Panc1 (cell line): ENCODE measurements at regions of chr4 and their contacts with region 1.

Region 1: GRCh38 chr4:73662709-73663546 is 42.7 kb upstream of the RASSF6 start:
- DNase-seq: no peak
- ATAC-seq: peak; percentile 79
- H3K4me3 ChIP-seq: no peak overlapping the region
- H3K27ac ChIP-seq: peak overlapping the region; percentile 63; the same call in 1 of the 2 replicates
- H3K4me1 ChIP-seq: no peaks in the 10 kb centered on the region
- H3K27me3 ChIP-seq: no peaks in the 10 kb centered on the region
- CTCF ChIP-seq: peak; percentile 55

Region 2: DNA sequence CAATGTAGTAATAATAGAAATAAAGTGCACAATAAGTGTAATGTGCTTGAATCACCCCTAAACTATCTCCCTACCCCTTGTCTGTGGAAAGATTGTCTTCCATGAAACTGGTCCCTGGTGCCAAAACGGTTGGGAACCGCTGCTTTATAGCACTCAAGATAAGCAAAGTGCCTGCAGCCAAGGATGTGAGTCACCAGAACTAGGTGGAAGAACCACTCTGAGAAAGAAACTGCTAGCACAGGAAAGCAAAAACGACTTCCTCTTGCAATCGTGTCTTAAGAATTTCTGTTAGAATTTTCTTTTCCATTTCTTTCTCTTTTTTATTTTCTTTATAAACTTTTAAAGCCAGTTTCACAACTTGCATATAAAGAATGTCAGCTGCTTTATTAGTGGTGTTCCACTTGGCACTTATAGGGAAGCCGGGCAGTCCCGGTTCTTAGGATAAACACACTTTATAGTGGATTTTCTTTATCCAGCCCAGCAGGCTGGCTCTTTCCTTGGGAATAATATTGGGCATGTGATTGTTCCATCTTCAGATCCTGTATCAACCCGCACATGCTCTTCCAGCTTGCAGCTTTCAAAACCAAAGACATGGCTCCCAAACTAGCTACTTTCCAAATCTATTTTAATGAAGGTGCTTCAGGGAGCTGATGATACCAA is 45.1 kb after region 1 on chr4:
- CTCF ChIA-PET with region 1: no interaction called
- POLR2A ChIA-PET with region 1: no interaction called
- in situ Hi-C with region 1: no loop called
- intact Hi-C with region 1: no loop called
- DNase-seq: no peak
- ATAC-seq: peak; percentile 95
- H3K4me3 ChIP-seq: peak overlapping the region; percentile 7 to 24; a peak in 2 of 4 replicates
- H3K27ac ChIP-seq: peak overlapping the region; percentile 97
- H3K4me1 ChIP-seq: peaks cover 21% of the 10 kb centered on the region
- H3K27me3 ChIP-seq: no peaks in the 10 kb centered on the region
- CTCF ChIP-seq: no peak

Region 3: DNA sequence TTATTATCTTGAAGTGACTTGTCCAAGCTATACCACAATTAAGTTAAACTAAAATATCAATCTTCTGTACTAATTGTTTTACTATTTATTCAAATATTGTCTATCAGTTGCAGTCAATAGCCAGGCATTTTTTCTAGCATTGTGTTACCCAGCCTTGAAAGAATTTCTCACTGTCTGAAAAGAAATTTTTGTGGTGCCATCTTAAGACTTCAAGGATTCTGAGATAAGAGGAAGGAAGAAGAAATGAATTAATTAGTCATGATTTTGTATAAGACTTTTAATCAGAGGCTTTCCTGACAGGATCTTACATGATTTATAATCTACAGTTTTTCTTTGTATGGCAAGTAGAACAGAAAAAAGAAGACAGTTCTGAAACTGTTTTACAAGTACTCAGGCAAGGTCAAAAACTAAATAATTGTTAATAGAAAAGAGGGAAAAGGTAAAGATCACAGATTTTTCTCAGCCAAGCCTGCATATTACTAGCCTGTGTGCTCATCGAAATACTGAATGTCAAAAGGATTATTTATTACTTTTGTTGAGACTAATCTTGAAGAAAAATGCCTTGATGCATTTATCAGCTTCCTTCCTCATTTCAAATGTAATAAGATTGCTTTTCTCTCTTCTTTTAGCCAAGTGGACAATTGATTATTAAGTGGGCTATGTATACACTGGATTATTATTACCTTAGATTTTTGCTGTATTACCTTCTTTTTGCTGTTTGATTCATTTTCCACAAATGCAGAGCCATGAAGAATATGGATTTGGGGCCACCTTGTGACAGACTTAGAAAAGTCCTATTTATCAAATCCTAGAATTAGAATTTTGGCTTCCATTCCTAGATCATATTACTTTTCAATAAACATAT is 260.1 kb after region 1 on chr4:
- CTCF ChIA-PET with region 1: no interaction called
- POLR2A ChIA-PET with region 1: no interaction called
- in situ Hi-C with region 1: no loop called
- intact Hi-C with region 1: loop called (anchors 2 kb)
- DNase-seq: no peak
- ATAC-seq: no peak
- H3K4me3 ChIP-seq: no peak overlapping the region
- H3K27ac ChIP-seq: peak overlapping the region; percentile 4; the same call in 1 of the 2 replicates
- H3K4me1 ChIP-seq: peaks cover 4% of the 10 kb centered on the region; the same call in 1 of the 2 replicates
- H3K27me3 ChIP-seq: no peaks in the 10 kb centered on the region
- CTCF ChIP-seq: peak; percentile 43; the same call in 1 of the 2 replicates